Activated CD8-positive, alpha-beta T cell treated with anti-CD3 and anti-CD28 coated beads, Interleukin-2, amount 10 ng/mL, durations not matched to agents 7 days and 5 days (primary cell): ENCODE measurements at regions of chr17 and their contacts with region 1.

Region 1: DNA sequence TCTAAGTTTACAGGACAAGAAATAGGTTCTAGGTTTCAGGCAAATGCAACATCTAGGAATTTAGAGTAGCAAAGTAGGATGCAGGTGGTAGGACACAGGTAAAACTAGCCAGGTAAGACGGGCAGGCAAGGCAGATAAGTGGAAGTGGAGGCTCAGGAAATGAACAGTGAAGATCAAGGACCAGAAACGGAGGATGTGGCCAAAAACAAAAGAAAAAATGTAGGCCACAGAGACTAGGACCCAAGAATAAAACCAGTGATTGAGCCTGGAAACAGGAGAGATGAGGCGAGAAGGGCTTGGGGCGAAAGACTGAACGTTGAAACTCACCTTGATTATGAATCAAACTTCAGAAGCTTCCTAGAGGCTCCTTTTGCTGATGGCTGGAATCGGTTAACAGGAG is 24.0 kb downstream of the CPSF4L start:
- DNase-seq: peak; percentile 28
- ATAC-seq: peak; percentile 14
- H3K4me3 Mint-ChIP-seq: peak overlapping the region; percentile 16
- H3K27ac Mint-ChIP-seq: peak overlapping the region; percentile 67
- H3K4me1 Mint-ChIP-seq: peaks cover 44% of the 10 kb centered on the region
- H3K27me3 Mint-ChIP-seq: no peaks in the 10 kb centered on the region

Region 2: GRCh38 chr17:73255671-73256181 is 18.0 kb after region 1 on chr17:
- CTCF ChIA-PET with region 1: interaction called, 23 read pairs
- POLR2A ChIA-PET with region 1: interaction called, 4 read pairs
- DNase-seq: peak; percentile 68
- ATAC-seq: peak; percentile 79
- H3K4me3 Mint-ChIP-seq: no peak overlapping the region
- H3K27ac Mint-ChIP-seq: no peak overlapping the region
- H3K4me1 Mint-ChIP-seq: no peaks in the 10 kb centered on the region
- H3K27me3 Mint-ChIP-seq: no peaks in the 10 kb centered on the region